ENCODE measurements at regions of chr22 and their contacts with region 1.

Region 1: GRCh38 chr22:28741758-28742561 is at the starts of genes CHEK2 and HSCB:
- DNase-seq: peak; percentile 96 to 99
- H3K4me3 ChIP-seq: peak within 1 kb of the TSS; percentile 65 to 98
- H3K27ac ChIP-seq: peak within 1 kb of the TSS; percentile 98 to 100
- H3K4me1 ChIP-seq: peaks cover 0 to 8% of the 10 kb centered on the region in 2 donors
- H3K27me3 ChIP-seq: no peaks in the 10 kb centered on the region
- CTCF ChIP-seq: no peak
- total RNA-seq, gene CHEK2: 1.3 TPM
- total RNA-seq, gene HSCB: 0.85 TPM

Region 2: DNA sequence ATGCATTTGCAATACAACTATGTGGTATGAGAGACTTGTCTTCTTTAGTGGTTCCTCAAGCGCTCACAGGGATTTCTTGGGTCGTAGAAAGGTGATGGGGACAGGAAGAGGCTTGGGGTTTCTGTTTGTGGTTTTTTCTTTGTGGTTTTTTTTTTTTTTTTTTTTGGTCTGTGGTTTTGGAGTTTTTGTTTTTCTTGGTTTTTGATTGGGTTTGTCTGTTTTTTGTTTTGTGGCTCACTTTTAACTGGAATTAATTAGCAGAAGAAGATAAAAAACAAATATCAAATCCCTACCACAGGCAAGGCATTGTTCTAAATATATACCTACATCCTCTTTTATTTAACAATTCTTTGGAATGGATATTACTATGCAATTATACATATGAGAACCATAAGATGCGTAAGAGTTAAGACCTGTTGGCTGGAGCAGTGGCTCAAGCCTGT is 67.8 kb before region 1 on chr22:
- intact Hi-C with region 1: loop called (anchors 1 kb)
- DNase-seq: no peak
- H3K4me3 ChIP-seq: no peak overlapping the region
- H3K27ac ChIP-seq: no peak overlapping the region
- H3K4me1 ChIP-seq: peaks cover 0 to 3% of the 10 kb centered on the region in 2 donors
- H3K27me3 ChIP-seq: no peaks in the 10 kb centered on the region
- CTCF ChIP-seq: no peak

Region 3: GRCh38 chr22:28711820-28712777 is 29.9 kb before region 1 on chr22:
- intact Hi-C with region 1: loop called (anchors 1 kb)
- DNase-seq: no peak
- H3K4me3 ChIP-seq: peak overlapping the region; percentile 34 to 36
- H3K27ac ChIP-seq: peak overlapping the region; percentile 52 to 75
- H3K4me1 ChIP-seq: peaks cover 0 to 2% of the 10 kb centered on the region in 2 donors
- H3K27me3 ChIP-seq: no peaks in the 10 kb centered on the region
- CTCF ChIP-seq: no peak

Region 4: DNA sequence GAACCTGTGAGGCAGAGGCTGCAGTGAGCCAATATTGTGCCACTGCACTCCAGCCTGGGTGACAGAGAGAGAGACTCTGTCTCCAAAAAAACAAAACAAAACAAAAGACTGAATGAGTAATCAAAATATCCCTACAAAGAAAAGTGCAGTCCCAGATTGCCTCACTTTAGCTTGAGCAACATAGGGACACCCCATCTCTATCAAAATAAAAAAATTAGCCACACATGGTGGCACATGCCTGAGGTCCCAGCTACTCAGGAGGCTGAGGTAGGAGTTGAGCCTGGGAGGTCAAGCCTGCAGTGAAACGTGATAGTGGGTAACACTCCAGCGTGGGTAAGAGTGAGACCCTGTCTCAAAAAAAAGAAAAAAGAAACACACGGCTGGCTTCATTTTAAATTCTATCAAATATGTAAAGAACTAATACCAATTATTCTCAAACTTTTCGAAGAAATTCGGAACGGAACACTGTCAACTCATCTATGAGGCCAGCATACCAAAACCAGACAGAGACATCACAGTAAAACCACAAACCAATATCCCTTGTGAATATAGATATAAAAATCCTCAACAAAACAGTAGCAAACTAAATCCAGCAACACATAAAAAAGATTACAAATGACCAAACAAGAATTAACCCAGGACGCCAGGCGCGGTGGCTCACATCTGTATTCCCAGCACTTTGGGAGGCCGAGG is 13.2 kb before region 1 on chr22:
- intact Hi-C with region 1: no loop called
- DNase-seq: no peak
- H3K4me3 ChIP-seq: no peak overlapping the region
- H3K27ac ChIP-seq: no peak overlapping the region
- H3K4me1 ChIP-seq: no peaks in the 10 kb centered on the region
- H3K27me3 ChIP-seq: no peaks in the 10 kb centered on the region
- CTCF ChIP-seq: no peak

Measured in ascending aorta (tissue), 2 donors.